ENCODE measurements at regions of chr4 and their contacts with region 1.

Region 1: DNA sequence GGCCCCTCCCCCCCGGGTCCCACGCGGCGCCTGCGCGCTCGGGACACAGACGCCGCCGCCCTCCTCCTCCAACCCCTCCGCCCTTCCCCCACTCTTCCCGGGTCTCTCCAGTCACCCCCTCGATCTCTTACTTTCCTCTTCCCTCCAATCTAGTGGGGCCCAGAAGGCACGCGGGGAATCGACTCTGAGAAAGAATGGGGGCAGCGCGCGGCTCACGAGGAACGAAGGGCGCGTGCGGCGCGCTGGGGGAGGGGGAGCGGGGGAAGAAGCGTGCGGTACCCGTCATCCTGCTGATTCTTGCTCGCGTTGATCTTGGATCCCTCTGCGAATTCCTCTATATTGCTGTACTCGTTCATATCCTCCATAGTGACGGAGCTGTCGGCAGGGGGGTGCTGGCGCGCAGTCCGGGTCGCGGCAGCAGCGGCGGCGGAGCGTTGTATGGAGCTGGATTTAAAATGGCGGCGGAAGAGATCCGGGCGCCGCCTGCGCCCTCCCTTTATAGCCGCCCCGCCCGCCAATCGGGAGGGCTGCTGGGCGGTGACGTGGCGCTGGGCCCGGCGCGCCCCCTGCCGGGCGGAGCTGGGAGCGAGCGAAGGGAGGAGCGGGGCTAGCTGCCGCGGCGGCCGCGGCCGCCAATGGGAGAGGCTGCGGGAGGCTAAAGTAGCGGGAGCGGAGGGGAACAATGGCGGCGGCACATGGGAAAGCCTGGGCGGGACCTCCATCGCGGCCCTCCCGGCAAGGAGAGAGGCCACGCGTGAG is 1.1 kb downstream of the HNRNPDL start:
- DNase-seq: peak; percentile 94 to 97
- ATAC-seq: peak; percentile 96
- H3K4me3 ChIP-seq: peak overlapping the region; percentile 90 to 93
- H3K27ac ChIP-seq: peak overlapping the region in 1 of 2 donors; percentile 97
- H3K4me1 ChIP-seq: peaks cover 0 to 6% of the 10 kb centered on the region in 2 donors
- H3K27me3 ChIP-seq: no peaks in the 10 kb centered on the region

Region 2: DNA sequence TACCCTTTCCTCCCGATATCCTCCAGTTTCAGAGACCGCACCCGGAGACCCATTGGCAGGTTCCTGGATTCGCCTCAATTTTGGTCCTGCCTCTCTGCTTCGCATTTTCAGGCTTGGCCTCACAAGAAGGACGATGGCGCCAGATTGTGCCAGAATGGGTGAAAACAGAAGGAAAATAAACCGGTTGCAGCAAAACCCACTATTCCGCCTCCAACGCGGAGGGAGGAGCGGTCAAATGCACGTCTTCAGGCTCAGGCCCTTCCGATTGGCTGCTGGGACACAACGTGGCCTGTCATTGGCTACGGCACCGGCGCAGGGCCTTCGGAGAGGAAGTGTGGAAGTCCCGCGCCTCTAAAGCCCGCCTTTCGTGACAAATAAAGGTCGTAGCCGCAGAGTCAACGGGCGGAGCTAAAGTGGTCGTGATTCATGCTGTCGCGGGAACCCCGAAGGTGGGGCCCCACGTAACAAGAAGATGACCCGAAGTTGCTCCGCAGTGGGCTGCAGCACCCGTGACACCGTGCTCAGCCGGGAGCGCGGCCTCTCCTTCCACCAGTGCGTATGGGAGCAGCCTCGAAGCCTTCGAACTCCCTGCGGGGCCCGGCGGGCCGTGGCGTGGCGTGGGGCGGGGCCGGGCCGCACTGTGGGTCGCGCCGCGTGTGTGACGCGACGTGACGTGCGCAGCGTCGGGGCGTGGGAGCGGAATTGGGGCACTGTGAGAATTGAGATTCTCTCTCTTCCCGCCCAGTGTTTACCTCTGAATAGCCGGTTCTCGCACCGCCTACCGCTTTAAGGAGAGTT is 471.4 kb after region 1 on chr4 and contains the start of gene THAP9:
- intact Hi-C with region 1: loop called in 1 of 2 experiments (anchors 5 kb)
- DNase-seq: peak; percentile 99
- ATAC-seq: peak; percentile 99
- H3K4me3 ChIP-seq: peak within 1 kb of the TSS; percentile 90 to 91
- H3K27ac ChIP-seq: peak within 1 kb of the TSS; percentile 85 to 96
- H3K4me1 ChIP-seq: peaks cover 0 to 2% of the 10 kb centered on the region in 2 donors
- H3K27me3 ChIP-seq: no peaks in the 10 kb centered on the region
- total RNA-seq, gene THAP9: 2.6 to 6.5 TPM